ENCODE measurements at regions of chr9 and their contacts with region 1.

Region 1: DNA sequence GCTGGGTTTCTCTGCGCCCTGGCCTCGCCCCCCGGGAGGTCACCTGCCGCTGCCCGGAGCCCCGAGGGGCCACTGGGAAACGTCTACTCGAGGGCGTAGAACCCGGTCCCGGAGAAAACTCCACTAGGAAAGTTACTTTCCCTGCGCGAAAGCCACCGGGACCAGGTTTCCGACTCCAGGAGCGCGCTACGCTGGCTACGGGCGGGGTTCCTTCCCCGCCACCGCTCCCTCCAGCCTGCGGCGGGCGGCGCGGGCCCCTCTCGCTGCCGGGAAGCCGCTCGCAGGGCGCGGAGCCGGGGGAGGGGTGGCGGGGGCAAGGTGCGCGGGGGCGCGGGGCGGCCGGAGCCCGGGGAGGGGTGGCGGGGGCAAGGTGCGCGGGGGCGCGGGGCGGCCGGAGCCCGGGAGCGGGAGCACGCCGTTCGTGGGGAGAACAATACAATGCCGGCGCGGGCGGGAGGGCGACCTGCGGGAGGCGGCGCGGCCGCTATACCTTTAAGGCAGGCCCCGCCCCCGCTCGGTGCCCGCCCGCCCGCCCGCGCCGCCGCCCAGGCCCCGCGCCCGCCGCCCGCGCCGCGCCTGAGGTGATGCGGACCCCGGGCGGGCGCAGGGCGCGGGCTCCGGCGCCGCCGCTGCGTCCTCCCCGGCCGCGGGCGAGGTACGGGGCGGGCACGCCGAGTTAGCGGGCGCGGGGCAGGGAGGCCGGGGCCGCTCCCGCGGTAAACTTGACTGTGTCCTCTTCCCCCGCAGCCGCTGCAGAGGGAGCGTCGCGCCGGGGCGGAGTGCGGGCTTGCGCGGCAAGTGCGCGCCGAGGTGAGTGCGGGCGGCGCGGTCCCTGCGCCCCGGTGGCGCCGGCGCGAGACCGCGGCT is 278.1 kb downstream of the AOPEP start:
- DNase-seq: peak; percentile 32
- H3K4me3 Mint-ChIP-seq: peak overlapping the region; percentile 83
- H3K27ac Mint-ChIP-seq: peak overlapping the region; percentile 80
- H3K4me1 Mint-ChIP-seq: peaks cover 41% of the 10 kb centered on the region
- H3K27me3 Mint-ChIP-seq: peaks cover 45% of the 10 kb centered on the region

Region 2: DNA sequence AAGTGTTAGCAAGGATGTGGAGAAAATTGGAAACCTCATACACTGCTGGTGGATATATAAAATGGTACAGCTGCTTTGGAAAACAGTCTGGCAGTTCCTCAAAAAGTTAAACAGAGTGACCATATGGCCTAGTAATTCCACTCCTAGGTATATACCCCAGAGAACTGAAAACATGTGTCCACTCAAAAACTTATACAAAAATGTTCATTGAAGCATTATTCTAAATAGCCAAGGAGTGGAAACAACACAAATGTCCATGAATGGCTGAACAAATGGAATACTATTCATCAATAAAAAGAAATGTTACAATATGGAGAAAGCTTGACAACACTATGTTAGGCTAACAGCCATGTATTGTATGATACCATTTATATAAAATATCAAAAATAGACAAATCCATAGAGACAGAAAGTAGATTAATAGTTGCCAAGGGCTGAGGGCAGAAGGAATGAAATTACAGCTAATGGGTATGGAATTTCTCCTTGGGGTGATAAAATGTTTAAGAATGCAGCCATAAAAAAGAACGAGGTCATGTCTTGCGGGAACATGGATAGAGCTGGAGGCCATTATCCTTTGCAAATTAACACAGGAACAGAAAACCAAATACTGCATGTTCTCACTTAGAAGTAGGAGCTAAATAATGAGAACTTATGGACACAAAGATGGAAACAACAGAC is 331.7 kb before region 1 on chr9:
- intact Hi-C with region 1: loop called (anchors 2 kb)
- DNase-seq: no peak
- H3K4me3 Mint-ChIP-seq: no peak overlapping the region
- H3K27ac Mint-ChIP-seq: no peak overlapping the region
- H3K4me1 Mint-ChIP-seq: peaks cover 11% of the 10 kb centered on the region
- H3K27me3 Mint-ChIP-seq: peaks cover 12% of the 10 kb centered on the region

Region 3: GRCh38 chr9:94802793-94803192 is 201.9 kb before region 1 on chr9:
- intact Hi-C with region 1: loop called (anchors 2 kb)
- DNase-seq: peak; percentile 4
- H3K4me3 Mint-ChIP-seq: peak overlapping the region; percentile 28
- H3K27ac Mint-ChIP-seq: peak overlapping the region; percentile 66
- H3K4me1 Mint-ChIP-seq: peaks cover 40% of the 10 kb centered on the region
- H3K27me3 Mint-ChIP-seq: no peaks in the 10 kb centered on the region

Region 4: DNA sequence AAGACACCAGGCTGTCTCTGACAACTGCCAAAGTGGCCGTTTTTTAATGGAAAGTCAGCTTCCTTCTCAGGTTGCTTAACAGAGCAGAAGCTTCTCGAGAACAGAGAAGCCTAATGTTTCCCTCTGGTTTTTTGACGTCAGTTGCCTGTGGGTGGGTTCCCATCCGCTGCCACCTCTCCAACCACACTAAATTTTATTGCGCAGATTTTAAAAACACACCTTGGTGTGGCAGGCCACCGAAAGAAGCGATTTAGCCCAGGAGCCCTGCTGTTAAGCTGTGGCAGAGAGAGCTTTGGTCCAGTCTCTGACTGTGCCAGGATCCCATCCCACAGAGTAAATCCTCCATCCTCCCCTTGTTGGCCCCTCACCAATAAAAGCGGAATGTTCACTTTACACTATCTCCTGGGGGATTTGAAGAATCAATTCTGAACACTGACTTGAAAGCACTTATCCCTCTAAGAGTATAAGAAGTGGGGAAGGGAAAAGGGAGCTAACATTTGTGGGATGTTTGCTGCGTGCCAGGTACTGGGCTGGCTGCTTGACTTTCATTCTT is 96.6 kb before region 1 on chr9:
- intact Hi-C with region 1: loop called (anchors 2 kb)
- DNase-seq: no peak
- H3K4me3 Mint-ChIP-seq: no peak overlapping the region
- H3K27ac Mint-ChIP-seq: no peak overlapping the region
- H3K4me1 Mint-ChIP-seq: no peaks in the 10 kb centered on the region
- H3K27me3 Mint-ChIP-seq: peaks cover 2% of the 10 kb centered on the region

Region 5: DNA sequence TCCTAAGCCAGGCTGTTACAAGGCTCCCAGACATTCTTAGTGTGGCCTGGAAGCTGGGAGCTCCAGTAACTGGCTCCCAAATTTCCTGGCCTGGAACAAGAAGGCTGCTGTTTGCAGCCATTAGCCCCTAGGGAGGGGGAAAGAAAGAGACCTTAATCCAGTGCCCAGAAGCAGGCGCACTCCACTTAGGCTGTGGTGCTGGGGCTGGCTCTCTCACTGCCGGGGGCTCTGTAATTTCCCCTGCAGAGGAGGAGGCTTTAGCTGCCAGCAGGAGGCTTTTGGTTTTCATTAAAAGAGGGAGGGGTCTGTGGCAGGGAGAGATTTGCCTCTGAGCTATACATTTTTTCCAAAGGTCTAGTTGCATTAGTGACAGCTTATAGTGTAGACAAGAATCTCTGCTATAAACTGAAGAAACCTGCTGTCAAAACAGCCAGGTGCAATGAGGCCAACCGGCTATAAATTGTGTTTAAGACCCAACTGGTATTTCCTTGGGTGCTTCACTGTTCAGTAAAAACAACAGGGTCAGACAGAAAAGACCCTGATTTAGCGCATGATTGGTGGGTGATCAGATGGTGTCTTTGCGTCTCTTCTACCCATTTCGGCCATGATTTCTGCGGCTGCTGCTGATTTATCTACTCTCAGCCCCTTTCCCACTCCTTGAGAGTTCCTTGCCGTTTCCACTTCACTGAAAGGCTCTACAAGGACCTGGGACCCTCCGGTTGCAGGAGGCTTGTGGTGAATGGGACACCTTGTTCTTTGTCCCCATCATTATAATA is 23.5 kb before region 1 on chr9:
- intact Hi-C with region 1: no loop called
- DNase-seq: no peak
- H3K4me3 Mint-ChIP-seq: no peak overlapping the region
- H3K27ac Mint-ChIP-seq: no peak overlapping the region
- H3K4me1 Mint-ChIP-seq: peaks cover 14% of the 10 kb centered on the region
- H3K27me3 Mint-ChIP-seq: peaks cover 2% of the 10 kb centered on the region

Region 6: GRCh38 chr9:94993064-94993833 is 11.4 kb before region 1 on chr9:
- intact Hi-C with region 1: no loop called
- DNase-seq: no peak
- H3K4me3 Mint-ChIP-seq: no peak overlapping the region
- H3K27ac Mint-ChIP-seq: no peak overlapping the region
- H3K4me1 Mint-ChIP-seq: no peaks in the 10 kb centered on the region
- H3K27me3 Mint-ChIP-seq: peaks cover 7% of the 10 kb centered on the region

Region 7: GRCh38 chr9:95167998-95168397 is 163.4 kb after region 1 on chr9:
- intact Hi-C with region 1: loop called (anchors 2 kb)
- DNase-seq: peak; percentile 47
- H3K4me3 Mint-ChIP-seq: peak overlapping the region; percentile 3
- H3K27ac Mint-ChIP-seq: peak overlapping the region; percentile 61
- H3K4me1 Mint-ChIP-seq: peaks cover 48% of the 10 kb centered on the region
- H3K27me3 Mint-ChIP-seq: no peaks in the 10 kb centered on the region